Transverse colon (tissue), 4 donors: ENCODE measurements at regions of chr1 and their contacts with region 1.

Region 1: DNA sequence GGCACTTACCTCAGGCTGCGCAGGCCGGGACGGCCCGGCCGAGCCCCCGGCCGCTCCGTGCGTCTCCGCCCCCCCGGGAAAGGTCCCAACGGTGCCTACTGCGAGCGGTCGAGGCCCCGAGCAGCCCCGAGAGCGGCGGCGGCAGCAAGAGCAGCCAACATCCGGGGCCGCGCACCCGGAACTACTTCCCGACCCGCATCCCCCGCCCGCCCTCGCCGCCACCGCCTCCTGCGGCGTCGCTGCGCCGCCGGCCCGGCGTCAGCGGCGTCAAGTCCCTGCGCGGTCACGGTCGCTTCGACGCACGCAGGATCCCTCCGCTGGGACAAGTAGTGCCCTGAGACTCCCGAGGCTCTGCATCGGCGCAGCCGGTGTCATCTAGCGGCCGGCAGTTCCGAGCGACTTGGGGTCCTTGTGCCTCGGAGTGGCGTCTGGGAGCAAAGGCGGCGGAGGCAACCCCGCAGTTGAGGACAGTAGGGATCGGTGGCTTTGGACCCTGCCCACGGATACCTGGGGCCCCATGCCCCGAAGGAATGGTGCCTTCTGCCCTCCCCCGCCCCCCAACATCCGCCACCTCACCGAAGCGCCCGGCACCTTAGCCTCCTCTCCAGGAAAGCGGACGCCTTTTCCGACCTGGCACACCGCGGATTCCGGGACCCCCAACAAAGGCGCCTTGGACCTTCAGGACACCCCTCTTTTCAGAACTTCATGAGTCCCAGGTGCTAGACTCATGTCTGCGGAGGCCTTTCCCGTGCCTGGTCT is at the start of gene FOXJ3:
- DNase-seq: peak; percentile 94
- H3K4me3 ChIP-seq: peak within 1 kb of the TSS; percentile 80 to 100 (median 93)
- H3K27ac ChIP-seq: peak within 1 kb of the TSS; percentile 95 to 99 (median 96)
- H3K4me1 ChIP-seq: peaks cover 4 to 62% (median 35%) of the 10 kb centered on the region in 4 donors
- H3K27me3 ChIP-seq: no peaks in the 10 kb centered on the region
- CTCF ChIP-seq: peak in 1 of 5 experiments; percentile 28
- EP300 ChIP-seq: no peak
- POLR2A ChIP-seq: peak; percentile 81
- total RNA-seq, gene FOXJ3: 18.5 to 62.1 (median 38.6) TPM

Region 2: GRCh38 chr1:42657971-42658879 is 323.0 kb after region 1 on chr1 and contains the start of gene PPIH:
- in situ Hi-C with region 1: loop called in 1 of 4 experiments (anchors 25 kb)
- intact Hi-C with region 1: no loop called
- DNase-seq: peak; percentile 96
- H3K4me3 ChIP-seq: peak within 1 kb of the TSS; percentile 60 to 88 (median 76)
- H3K27ac ChIP-seq: peak within 1 kb of the TSS; percentile 80 to 88 (median 84)
- H3K4me1 ChIP-seq: peaks cover 13 to 22% (median 16%) of the 10 kb centered on the region in 4 donors
- H3K27me3 ChIP-seq: no peaks in the 10 kb centered on the region
- CTCF ChIP-seq: peak; percentile 26 to 74 (median 30)
- EP300 ChIP-seq: no peak
- POLR2A ChIP-seq: peak; percentile 50
- total RNA-seq, gene PPIH: 16.9 to 26.5 (median 24.6) TPM in 3 of 4 donors, not detected in the other

Region 3: GRCh38 chr1:42766741-42767509 is 431.7 kb after region 1 on chr1 and contains the starts of genes C1orf50 and P3H1:
- in situ Hi-C with region 1: loop called in 3 of 4 experiments (anchors 10 to 25 kb)
- intact Hi-C with region 1: loop called (anchors 10 kb)
- DNase-seq: peak; percentile 100
- H3K4me3 ChIP-seq: peak within 1 kb of the TSS; percentile 90 to 99 (median 94)
- H3K27ac ChIP-seq: peak within 1 kb of the TSS; percentile 92 to 95 (median 94)
- H3K4me1 ChIP-seq: peaks cover 15 to 41% (median 19%) of the 10 kb centered on the region in 4 donors
- H3K27me3 ChIP-seq: no peaks in the 10 kb centered on the region
- CTCF ChIP-seq: no peak
- EP300 ChIP-seq: no peak
- POLR2A ChIP-seq: peak; percentile 98
- total RNA-seq, gene C1orf50: 4.0 to 81.2 (median 8.1) TPM
- total RNA-seq, gene P3H1: 8.7 to 37.2 (median 10.2) TPM